CD14-positive monocyte (primary cell): ENCODE measurements at regions of chr22 and their contacts with region 1.

Region 1: DNA sequence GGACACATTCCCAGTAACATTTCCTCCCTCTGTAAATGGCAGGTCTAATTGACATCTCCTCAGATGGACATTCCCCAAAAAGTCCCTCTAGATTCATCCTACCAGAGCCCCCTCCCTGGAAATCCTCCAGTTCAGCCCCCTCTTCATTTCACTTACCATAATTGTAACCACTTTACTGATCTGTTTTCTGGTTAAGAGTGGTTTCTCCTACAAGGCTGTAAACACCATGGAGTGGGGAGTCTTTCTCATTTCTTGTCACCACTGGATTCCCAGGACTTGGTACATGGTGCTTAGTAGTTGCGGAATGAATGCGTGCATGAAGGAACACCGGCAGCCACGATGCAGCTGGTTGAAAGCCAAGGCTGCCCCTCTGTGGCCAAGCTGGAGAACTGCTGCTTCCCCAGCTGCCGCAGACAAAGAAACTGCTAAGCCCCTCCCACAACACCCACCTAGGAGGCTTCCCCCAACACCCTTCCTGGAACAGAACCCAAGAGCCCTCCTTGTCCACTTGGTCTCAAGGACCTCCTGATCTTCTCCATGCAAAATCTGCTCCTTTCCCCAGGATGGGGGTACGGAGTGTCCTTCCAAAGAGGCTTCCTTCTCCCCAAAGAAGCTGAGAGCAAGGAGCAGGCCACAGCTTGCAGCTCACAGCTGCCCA is 18.6 kb upstream of the SCARF2 start:
- DNase-seq: peak; percentile 64 to 74 (median 74)
- H3K4me3 ChIP-seq: no peak overlapping the region
- H3K4me3 Mint-ChIP-seq: no peak overlapping the region
- H3K27ac ChIP-seq: no peak overlapping the region
- H3K27ac Mint-ChIP-seq: peak overlapping the region in 2 of 7 donors; percentile 39 to 73
- H3K4me1 ChIP-seq: peaks cover 25 to 29% of the 10 kb centered on the region in 2 donors
- H3K4me1 Mint-ChIP-seq: peaks cover 24% of the 10 kb centered on the region
- H3K27me3 ChIP-seq: no peaks in the 10 kb centered on the region
- H3K27me3 Mint-ChIP-seq: peaks cover 0 to 4% (median 0%) of the 10 kb centered on the region in 3 donors
- CTCF ChIP-seq: peak; percentile 92

Region 2: DNA sequence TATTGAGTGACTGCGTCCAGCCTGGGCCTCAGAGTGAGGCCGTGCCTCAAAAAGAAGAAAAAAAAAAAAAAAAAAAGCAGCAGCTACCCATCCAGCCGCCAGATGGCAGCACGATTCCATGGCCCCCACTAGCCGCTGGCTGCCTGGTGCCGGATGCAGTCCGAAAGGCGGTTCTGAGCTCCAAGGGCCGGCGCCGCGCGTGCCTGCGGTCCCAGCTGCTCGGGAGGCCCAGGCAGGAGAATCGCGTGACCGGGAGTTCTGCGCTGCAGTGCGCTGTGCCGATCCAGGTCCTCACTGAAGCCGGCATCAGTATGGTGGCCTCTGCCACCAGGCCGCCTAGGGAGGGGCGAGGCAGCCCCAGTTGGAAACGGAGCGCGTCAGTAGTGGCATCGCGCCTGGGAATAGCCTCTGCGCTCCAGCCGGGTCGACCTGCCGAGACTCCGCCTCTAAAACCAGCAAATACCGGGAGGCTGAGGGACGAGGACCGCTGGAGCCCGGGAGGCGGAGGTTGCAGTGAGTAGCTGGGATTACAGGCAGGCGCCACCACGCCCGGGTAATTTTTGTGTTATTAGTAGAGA is 37.9 kb before region 1 on chr22:
- intact Hi-C with region 1: loop called (anchors 1 to 2 kb)
- DNase-seq: peak; percentile 71 to 77 (median 77)
- H3K4me3 ChIP-seq: peak overlapping the region; percentile 1 to 72 (median 19)
- H3K4me3 Mint-ChIP-seq: peak overlapping the region; percentile 65 to 87
- H3K27ac ChIP-seq: no peak overlapping the region
- H3K27ac Mint-ChIP-seq: no peak overlapping the region
- H3K4me1 ChIP-seq: peaks cover 5 to 9% of the 10 kb centered on the region in 2 donors
- H3K4me1 Mint-ChIP-seq: peaks cover 8% of the 10 kb centered on the region
- H3K27me3 ChIP-seq: peaks cover 0 to 8% of the 10 kb centered on the region in 2 donors
- H3K27me3 Mint-ChIP-seq: peaks cover 5 to 9% (median 8%) of the 10 kb centered on the region in 3 donors
- CTCF ChIP-seq: peak; percentile 94